Activated T-helper 2 cell treated with anti-CD3 and anti-CD28 coated beads, Interferon-gamma antibody, Interleukin-2, Interleukin-4, amounts not matched to agents 10 μg/mL and 5 μg/mL and 100 μg/mL, durations not matched to agents 14 hours and 24 hours and 36 hours (primary cell): ENCODE measurements at regions of chr1 and their contacts with region 1.

Region 1: GRCh38 chr1:158931055-158931737 is at the start of gene PYHIN1:
- DNase-seq: peak; percentile 20
- H3K4me3 Mint-ChIP-seq: peak within 1 kb of the TSS; percentile 91
- H3K27ac Mint-ChIP-seq: peak within 1 kb of the TSS; percentile 91
- H3K4me1 Mint-ChIP-seq: peaks cover 35% of the 10 kb centered on the region
- H3K27me3 Mint-ChIP-seq: no peaks in the 10 kb centered on the region
- total RNA-seq, gene PYHIN1: 7.4 and 10.0 TPM in 2 replicates

Region 2: GRCh38 chr1:158901623-158902022 is 29.6 kb before region 1 on chr1:
- intact Hi-C with region 1: loop called (anchors 2 kb)
- DNase-seq: no peak
- H3K4me3 Mint-ChIP-seq: no peak overlapping the region
- H3K27ac Mint-ChIP-seq: no peak overlapping the region
- H3K4me1 Mint-ChIP-seq: peaks cover 3% of the 10 kb centered on the region
- H3K27me3 Mint-ChIP-seq: peaks cover 17% of the 10 kb centered on the region

Region 3: GRCh38 chr1:158916085-158916484 is 15.1 kb before region 1 on chr1:
- intact Hi-C with region 1: no loop called
- DNase-seq: no peak
- H3K4me3 Mint-ChIP-seq: no peak overlapping the region
- H3K27ac Mint-ChIP-seq: no peak overlapping the region
- H3K4me1 Mint-ChIP-seq: no peaks in the 10 kb centered on the region
- H3K27me3 Mint-ChIP-seq: peaks cover 16% of the 10 kb centered on the region

Region 4: DNA sequence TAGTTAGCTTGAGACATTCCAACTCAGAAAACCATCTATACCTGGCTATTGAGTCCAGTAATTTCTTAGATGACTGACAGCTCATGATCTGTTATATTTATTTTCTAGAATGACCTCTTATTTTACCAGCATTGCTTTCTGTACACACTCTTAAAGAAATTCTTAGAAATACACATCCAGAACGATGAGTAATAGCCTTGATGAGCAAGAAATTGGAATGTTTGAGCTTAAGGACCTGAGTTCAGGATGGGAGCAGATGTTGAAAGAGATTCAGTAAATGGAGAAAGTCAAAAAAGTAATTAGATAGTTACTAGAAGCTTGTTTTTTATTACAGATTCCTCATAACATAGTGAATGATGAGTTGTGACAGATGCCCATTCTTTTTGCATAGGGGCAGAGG is 11.9 kb after region 1 on chr1:
- intact Hi-C with region 1: loop called (anchors 1 kb)
- DNase-seq: no peak
- H3K4me3 Mint-ChIP-seq: no peak overlapping the region
- H3K27ac Mint-ChIP-seq: no peak overlapping the region
- H3K4me1 Mint-ChIP-seq: peaks cover 13% of the 10 kb centered on the region
- H3K27me3 Mint-ChIP-seq: no peaks in the 10 kb centered on the region

Region 5: GRCh38 chr1:159077120-159077961 is 146.1 kb after region 1 on chr1:
- intact Hi-C with region 1: loop called (anchors 2 kb)
- DNase-seq: peak; percentile 95
- H3K4me3 Mint-ChIP-seq: peak overlapping the region; percentile 89
- H3K27ac Mint-ChIP-seq: peak overlapping the region; percentile 98
- H3K4me1 Mint-ChIP-seq: peaks cover 37% of the 10 kb centered on the region
- H3K27me3 Mint-ChIP-seq: no peaks in the 10 kb centered on the region